B cell (primary cell): ENCODE measurements at regions of chr5 and their contacts with region 1.

Region 1: DNA sequence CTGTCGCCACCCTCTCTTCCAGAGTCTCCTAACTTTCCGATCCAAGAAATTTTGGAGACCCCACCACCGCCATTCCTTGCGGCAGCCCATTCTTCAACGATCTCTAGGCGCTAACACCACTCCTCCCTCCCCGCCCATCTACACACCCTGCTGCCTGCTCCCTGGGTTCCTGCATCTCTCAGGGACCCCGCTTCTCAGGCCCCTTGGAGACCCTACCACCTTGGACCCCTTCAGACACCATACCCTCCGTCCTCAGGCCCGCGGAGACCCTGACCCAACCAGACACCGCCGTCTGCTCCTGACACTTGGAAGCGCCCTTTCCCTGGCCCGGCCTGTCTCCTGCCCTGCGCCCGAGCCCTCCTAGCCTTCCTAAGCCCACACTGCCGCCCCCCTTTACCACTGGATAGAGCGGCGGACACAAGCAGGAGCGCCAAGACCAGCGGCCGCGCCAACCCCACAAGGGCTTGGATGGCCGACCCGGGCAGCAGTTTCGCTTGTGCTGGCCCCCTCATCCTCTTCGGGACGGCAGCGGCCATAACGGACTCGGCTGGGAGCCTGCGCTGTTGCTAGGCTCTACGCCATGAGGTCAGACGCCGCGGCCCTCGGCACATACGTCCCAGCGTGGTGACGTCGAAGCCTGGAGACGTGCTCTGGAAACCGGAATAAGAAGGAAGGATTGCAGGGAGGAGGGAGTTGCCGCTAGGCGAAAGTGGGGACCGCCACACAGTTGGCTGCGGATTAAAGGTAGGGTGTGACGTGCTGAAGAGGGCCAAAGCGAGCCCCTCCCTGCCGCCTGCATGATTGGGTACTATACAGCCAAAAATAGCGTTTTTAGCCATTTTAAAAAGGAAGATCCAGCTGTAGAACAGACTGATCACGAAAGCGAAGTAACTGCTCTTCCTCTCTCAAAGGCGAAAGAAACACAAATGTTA is at the start of gene C5orf15:
- DNase-seq: peak; percentile 96
- ATAC-seq: peak; percentile 95
- H3K4me3 ChIP-seq: peak within 1 kb of the TSS; percentile 82 to 88 (median 85)
- H3K4me3 Mint-ChIP-seq: peak within 1 kb of the TSS; percentile 95
- H3K27ac ChIP-seq: peak within 1 kb of the TSS; percentile 89 to 94
- H3K27ac Mint-ChIP-seq: peak within 1 kb of the TSS; percentile 97
- H3K4me1 ChIP-seq: peaks cover 25 to 26% of the 10 kb centered on the region in 2 donors
- H3K4me1 Mint-ChIP-seq: peaks cover 53% of the 10 kb centered on the region
- H3K27me3 ChIP-seq: no peaks in the 10 kb centered on the region
- H3K27me3 Mint-ChIP-seq: no peaks in the 10 kb centered on the region
- CTCF ChIP-seq: no peak
- total RNA-seq, gene C5orf15: 27.4 and 28.2 TPM in 2 replicates

Region 2: DNA sequence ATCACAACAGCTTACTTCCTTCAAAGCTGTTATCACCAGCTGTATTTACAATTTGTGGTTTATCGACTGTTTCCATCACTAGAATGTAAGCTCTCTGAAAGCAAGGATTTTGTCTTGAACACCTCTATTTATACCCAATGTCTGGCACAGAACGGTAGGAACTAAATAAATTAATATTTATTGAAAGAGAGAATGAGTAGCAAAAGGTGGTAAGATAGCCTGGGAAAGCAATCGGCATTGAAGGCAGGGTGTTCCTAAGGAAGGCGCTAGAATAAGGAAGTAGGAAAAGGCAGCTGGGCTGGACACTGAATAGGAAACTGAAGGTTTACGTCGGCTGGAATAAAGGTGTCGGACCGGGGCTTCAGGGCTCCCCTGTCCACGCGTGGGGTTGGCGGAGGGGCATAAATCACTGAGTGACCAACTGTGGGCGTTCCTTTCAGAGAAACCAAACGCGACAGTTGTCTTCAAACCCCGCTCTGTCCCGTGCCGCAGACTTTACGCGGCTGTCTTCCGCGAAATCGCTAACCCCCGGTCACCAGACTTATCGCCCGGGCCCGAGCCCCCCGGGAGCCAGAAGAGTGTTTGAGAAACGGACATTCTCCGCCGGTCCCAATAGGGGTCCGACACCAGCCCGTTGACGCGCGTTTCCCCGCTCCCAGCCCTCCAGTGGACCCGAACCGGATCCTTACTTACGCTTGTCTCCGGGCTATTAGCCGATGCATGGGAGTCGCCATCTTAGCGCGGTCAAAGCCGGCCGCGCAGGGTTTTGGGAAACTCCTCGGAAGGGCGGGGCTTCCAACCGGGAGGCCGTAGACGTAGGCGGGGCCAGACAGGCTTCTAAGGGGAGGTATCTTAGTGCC is 942.3 kb before region 1 on chr5 and contains the start of gene ZCCHC10:
- CTCF ChIA-PET with region 1: no interaction called
- POLR2A ChIA-PET with region 1: no interaction called
- intact Hi-C with region 1: loop called (anchors 10 kb)
- DNase-seq: peak; percentile 94
- ATAC-seq: peak; percentile 99
- H3K4me3 ChIP-seq: peak within 1 kb of the TSS; percentile 93 to 100 (median 98)
- H3K4me3 Mint-ChIP-seq: peak within 1 kb of the TSS; percentile 90
- H3K27ac ChIP-seq: peak within 1 kb of the TSS; percentile 92 to 98
- H3K27ac Mint-ChIP-seq: peak within 1 kb of the TSS; percentile 93
- H3K4me1 ChIP-seq: peaks cover 26 to 32% of the 10 kb centered on the region in 2 donors
- H3K4me1 Mint-ChIP-seq: peaks cover 42% of the 10 kb centered on the region
- H3K27me3 ChIP-seq: no peaks in the 10 kb centered on the region
- H3K27me3 Mint-ChIP-seq: no peaks in the 10 kb centered on the region
- CTCF ChIP-seq: no peak
- total RNA-seq, gene ZCCHC10: 30.6 and 34.0 TPM in 2 replicates

Region 3: DNA sequence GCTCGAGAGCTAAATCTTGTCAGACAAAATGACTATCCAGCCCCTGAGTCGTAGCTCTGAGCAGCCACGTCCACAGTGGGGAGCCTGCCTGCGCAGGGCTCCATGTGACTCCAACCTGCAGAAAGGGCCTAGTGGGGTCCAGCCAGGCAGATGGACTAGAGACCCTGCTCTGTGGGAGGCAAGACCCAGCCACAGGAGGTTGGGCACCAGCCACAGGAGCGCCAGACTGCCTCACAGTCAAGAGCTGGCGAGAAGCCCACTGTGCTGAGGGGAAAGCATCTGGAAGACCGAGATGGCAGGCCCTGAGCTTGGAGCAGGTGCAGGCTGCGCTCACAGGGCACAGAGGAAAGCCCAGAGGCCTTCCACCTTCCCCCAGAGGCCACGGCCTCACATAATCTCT is 61.2 kb before region 1 on chr5:
- CTCF ChIA-PET with region 1: interaction called, 4 read pairs
- POLR2A ChIA-PET with region 1: interaction called, 4 read pairs
- intact Hi-C with region 1: loop called (anchors 1 kb)
- DNase-seq: no peak
- ATAC-seq: no peak
- H3K4me3 ChIP-seq: no peak overlapping the region
- H3K4me3 Mint-ChIP-seq: no peak overlapping the region
- H3K27ac ChIP-seq: peak overlapping the region in 1 of 2 donors; percentile 56
- H3K27ac Mint-ChIP-seq: peak overlapping the region; percentile 50
- H3K4me1 ChIP-seq: peaks cover 0 to 12% of the 10 kb centered on the region in 2 donors
- H3K4me1 Mint-ChIP-seq: peaks cover 20% of the 10 kb centered on the region
- H3K27me3 ChIP-seq: no peaks in the 10 kb centered on the region
- H3K27me3 Mint-ChIP-seq: no peaks in the 10 kb centered on the region
- CTCF ChIP-seq: no peak

Region 4: DNA sequence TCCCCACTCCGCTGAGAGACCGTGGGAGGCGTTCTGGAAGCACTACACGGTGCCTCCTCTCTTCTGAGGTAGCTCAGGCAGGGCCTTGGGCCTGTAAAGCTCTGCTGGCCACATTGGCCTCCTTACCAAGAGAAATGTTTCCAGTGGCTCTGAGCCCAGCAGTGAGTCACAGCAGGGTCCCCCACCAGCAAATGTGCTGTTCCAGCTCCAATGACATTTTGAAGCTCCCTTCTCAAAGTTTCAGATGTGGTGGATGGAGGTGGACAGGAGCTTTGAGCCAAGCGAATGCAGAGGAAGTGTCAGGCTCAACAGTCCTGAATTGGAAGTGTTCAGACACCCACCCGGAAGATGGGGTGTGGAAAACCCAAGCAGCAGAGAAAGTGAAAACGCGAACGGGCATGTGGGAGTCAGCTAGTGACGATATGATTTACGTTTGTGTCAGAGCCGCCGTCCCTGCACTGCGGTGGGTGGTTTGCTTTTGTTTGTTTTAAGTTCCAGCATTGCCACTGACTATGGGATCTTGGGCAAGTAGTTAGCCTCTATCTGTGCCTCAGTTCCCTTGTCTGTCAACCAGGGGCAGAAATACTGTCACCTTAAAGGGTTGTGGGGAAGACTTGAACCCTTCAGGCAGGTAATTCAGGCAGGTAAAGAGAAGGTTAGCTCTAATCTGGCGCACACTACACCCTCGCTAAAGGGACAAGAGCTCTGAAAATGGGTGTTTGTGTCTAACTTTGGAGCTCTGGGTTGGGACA is 38.1 kb before region 1 on chr5:
- CTCF ChIA-PET with region 1: interaction called, 3 read pairs
- POLR2A ChIA-PET with region 1: interaction called, 5 read pairs
- intact Hi-C with region 1: loop called (anchors 1 kb)
- DNase-seq: peak; percentile 80
- ATAC-seq: peak; percentile 9
- H3K4me3 ChIP-seq: peak overlapping the region in 3 of 5 experiments; percentile 1 to 50 (median 33)
- H3K4me3 Mint-ChIP-seq: peak overlapping the region; percentile 79
- H3K27ac ChIP-seq: peak overlapping the region; percentile 93 to 96
- H3K27ac Mint-ChIP-seq: peak overlapping the region; percentile 95
- H3K4me1 ChIP-seq: peaks cover 86 to 90% of the 10 kb centered on the region in 2 donors
- H3K4me1 Mint-ChIP-seq: peaks cover 85% of the 10 kb centered on the region
- H3K27me3 ChIP-seq: no peaks in the 10 kb centered on the region
- H3K27me3 Mint-ChIP-seq: no peaks in the 10 kb centered on the region
- CTCF ChIP-seq: no peak

Region 5: DNA sequence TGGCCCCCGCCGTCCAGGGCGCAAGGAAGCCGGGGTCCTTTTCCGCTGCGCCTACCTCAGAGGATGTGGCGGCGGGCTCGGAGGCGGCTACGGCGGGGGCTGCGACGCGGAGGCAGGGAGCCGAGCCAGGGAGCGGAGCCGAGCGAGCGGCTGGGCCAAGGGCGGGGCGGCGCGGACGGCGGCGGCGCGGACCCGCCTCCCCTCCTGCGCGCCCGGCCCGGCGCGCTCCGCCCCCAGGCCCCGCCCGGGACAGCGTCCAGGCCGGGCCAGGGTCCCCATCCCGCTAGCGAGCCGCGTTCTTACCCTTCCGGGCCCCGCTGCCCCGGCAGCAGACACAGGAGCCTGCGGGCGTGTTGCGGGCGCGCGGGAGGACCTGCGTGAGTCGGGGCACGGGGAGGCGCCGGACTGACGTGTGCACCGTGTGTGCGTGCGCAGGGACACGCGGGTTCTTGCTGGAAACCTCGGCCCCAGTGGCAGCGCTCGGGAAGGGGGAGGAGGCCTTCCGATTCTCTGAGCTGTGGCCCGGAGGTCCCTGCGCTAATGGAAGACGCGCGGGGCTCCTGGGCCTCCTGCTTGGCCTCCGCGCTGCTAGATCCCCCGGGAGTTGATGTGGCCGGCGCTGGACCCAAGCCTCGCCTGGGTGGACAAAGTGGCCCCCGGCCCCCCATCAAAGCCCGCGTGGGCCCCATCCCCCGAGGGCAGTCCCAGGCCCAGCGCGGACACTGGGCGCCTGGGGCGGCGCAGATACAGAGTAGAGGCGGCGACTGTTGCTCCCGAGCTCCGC is 36.5 kb after region 1 on chr5 and contains the start of gene VDAC1:
- CTCF ChIA-PET with region 1: no interaction called
- POLR2A ChIA-PET with region 1: no interaction called
- intact Hi-C with region 1: loop called (anchors 1 kb)
- DNase-seq: peak; percentile 91
- ATAC-seq: peak; percentile 85
- H3K4me3 ChIP-seq: peak within 1 kb of the TSS; percentile 61 to 87 (median 82)
- H3K4me3 Mint-ChIP-seq: peak within 1 kb of the TSS; percentile 95
- H3K27ac ChIP-seq: peak within 1 kb of the TSS; percentile 74 to 95
- H3K27ac Mint-ChIP-seq: peak within 1 kb of the TSS; percentile 95
- H3K4me1 ChIP-seq: peaks cover 17 to 33% of the 10 kb centered on the region in 2 donors
- H3K4me1 Mint-ChIP-seq: peaks cover 44% of the 10 kb centered on the region
- H3K27me3 ChIP-seq: no peaks in the 10 kb centered on the region
- H3K27me3 Mint-ChIP-seq: no peaks in the 10 kb centered on the region
- CTCF ChIP-seq: no peak
- total RNA-seq, gene VDAC1: 60.7 and 63.4 TPM in 2 replicates

Region 6: DNA sequence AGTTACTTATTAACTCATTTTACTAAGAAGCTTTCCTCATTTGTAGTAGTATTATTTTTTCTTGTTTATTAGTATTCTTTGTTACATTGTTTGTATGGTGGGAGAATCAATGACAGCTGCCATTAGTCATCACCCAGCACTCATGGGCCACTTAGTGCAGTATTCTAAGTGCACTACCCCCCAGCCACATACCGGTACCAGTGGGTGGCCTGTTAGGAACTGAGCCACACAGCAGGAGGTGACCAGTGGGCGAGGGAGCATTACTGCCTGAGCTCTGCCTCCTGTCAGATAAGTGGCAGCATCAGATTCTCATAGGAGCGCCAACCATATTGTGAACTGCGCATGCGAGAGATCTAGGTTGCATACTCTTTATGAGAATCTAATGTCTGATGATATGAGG is 745.8 kb after region 1 on chr5:
- CTCF ChIA-PET with region 1: no interaction called
- POLR2A ChIA-PET with region 1: no interaction called
- intact Hi-C with region 1: no loop called
- DNase-seq: no peak
- ATAC-seq: no peak
- H3K4me3 ChIP-seq: no peak overlapping the region
- H3K4me3 Mint-ChIP-seq: no peak overlapping the region
- H3K27ac ChIP-seq: no peak overlapping the region
- H3K27ac Mint-ChIP-seq: no peak overlapping the region
- H3K4me1 ChIP-seq: no peaks in the 10 kb centered on the region
- H3K4me1 Mint-ChIP-seq: no peaks in the 10 kb centered on the region
- H3K27me3 ChIP-seq: no peaks in the 10 kb centered on the region
- H3K27me3 Mint-ChIP-seq: no peaks in the 10 kb centered on the region
- CTCF ChIP-seq: no peak